Lower leg skin (tissue), 4 donors: ENCODE measurements at regions of chrX and their contacts with region 1.

Region 1: DNA sequence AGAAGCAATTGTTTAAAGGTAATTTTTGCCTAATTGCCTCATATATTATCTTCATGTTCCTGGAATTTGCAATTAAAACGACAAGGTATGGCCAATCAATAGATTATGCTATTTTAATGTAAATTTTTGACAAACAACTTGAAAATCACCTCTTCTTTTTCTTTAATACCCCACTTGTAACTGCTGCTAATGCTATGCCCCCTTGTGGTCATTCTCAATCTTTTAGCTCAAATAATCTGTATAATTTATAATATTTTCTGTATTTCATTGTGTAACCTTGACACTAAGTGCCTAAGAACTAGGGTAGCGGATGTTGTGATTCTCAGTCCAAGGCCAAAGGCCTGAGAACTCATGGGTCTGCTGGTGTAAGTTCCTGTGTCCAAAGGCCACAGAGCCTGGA is 831.7 kb upstream of the POU3F4 start:
- DNase-seq: no peak
- H3K4me3 ChIP-seq: no peak overlapping the region
- CTCF ChIP-seq: no peak
- POLR2A ChIP-seq: no peak

Region 2: GRCh38 chrX:81377329-81377728 is 1299.1 kb before region 1 on chrX:
- intact Hi-C with region 1: loop called (anchors 5 kb)
- DNase-seq: no peak
- H3K4me3 ChIP-seq: no peak overlapping the region
- CTCF ChIP-seq: no peak
- POLR2A ChIP-seq: no peak

Region 3: DNA sequence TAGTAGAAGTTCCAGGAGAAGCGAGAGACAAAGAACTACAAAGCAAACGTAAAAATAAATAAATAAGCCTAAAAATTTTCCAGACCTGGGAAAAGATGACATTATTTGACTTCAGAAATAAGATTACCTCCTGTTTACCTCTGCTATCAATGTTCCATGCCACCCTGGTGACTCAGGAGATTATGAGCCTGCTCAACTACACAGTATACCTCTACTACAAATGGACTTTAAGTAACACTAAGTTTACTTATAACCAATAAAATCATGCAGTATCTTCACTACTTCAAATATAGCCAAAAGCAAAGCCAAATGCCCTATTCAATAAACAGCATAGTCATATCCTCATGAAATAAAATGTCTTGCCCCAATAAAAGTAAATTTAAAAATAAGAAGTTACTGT is 1290.0 kb after region 1 on chrX:
- intact Hi-C with region 1: no loop called
- DNase-seq: no peak
- H3K4me3 ChIP-seq: no peak overlapping the region
- CTCF ChIP-seq: no peak
- POLR2A ChIP-seq: no peak